HEK293 (cell line): ENCODE measurements at regions of chr17 and their contacts with region 1.

Region 1: DNA sequence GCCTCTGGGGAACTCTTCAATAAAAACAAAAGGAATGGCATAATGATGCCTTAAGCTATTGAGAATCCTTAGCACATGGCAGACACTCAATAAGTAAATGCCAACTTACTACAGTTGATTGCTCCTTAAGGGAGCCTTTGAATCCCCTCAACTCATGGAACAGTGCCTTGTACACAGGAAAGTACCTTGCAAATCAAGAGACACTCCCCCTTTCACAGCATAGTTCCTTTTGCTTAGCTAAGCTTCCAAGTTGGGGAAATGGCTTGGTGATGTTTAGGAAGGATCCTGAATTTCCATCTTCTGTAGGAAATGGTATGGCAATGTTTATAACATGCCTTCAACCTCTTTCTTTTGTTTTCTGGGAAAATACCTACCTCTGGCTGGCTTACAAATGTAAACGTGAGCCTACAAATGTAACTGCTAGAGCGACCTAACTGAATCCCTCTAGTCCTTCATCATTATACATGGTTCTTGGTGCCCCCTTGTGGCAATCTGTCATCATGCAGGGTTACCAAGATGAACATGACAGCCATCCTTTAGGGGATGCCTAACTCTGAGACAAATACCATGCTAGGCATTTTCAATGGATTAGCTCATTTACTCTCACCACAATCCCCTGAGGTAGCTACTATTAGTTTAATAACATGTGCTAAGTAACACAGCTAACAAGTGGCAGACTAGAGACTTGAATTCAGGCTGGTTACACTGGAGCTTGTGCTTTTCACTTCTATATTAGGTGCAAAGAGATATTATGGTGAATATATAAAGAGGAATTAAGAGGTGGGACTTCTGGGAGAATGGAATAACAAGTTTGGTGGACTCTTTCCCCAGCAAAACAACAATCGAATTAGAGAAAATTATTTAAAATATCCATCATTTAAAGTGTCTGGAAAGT is 65.0 kb downstream of the MMD start:
- H3K4me3 ChIP-seq: no peak overlapping the region
- H3K27ac ChIP-seq: no peak overlapping the region
- H3K4me1 ChIP-seq: no peaks in the 10 kb centered on the region
- CTCF ChIP-seq: peak; percentile 26; the same call in 1 of the 2 replicates

Region 2: DNA sequence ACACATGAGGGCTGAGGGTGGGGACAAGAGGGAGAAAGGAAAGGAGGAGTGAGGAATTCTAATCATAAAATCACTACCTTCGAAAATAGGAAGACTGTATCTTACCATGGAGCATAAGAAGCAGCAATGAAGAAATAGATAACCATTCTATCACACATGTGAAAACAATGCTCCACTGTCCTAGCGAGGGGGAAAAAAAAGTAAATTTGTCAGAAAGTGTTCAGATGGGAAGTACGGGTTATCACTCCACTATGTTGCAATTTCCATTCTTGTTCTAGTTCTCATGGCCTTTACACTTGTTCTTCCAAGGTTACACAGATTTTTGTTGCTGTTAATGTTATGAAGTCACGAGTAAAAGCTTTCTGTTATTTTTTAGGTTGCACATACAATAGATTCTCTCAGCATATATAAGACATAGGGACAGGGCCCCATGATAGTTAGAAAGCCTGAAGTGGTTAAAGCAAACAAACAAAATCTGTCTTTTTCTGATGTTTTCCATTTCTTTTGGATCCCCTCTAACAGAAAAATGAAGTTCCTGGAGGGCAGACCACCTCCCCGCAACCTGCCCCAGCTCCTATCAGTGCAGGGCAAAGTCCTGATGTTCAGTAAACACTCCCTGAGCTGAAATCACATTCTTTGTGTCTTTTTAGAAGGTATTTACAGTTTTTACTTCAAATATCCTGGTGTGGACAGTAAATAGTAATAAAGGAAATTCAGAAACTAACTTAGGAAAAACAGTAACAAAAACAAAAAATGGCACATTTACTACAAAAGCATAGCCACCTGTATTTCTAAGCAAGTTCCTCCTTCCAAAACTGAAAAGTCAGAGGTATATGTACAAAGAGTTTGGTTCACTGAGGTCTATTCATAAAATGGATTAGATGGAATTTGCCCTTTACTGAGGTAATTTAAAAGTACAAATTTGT is 51.2 kb after region 1 on chr17:
- CTCF ChIA-PET with region 1: interaction called, 10 read pairs
- POLR2A ChIA-PET with region 1: no interaction called
- H3K4me3 ChIP-seq: no peak overlapping the region
- H3K27ac ChIP-seq: no peak overlapping the region
- H3K4me1 ChIP-seq: no peaks in the 10 kb centered on the region
- CTCF ChIP-seq: no peak